ENCODE measurements at regions of chr7 and their contacts with region 1.

Region 1: DNA sequence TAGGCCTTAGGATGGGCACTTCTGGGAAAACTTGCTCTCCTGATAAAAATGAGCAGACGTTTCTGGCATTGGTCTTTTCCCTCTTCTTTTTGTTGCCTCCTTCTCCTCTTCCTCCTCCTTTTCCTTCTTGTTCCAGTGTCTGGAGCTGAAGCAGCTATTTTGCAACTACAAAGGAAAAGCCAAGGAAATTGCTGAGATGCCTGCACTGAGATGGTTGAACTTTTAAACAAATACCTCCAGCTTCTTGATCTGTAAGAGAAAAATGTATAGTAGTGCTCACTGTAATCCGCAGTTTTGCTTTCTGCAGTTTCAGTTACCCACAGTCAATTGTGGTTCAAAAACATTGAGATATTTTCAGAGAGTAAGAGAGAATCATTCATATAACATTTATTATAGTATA is 7.5 kb upstream of the SND1 start:
- DNase-seq: no peak
- ATAC-seq: no peak
- H3K4me3 ChIP-seq: no peak overlapping the region
- H3K27ac ChIP-seq: no peak overlapping the region
- H3K4me1 ChIP-seq: no peaks in the 10 kb centered on the region
- H3K27me3 ChIP-seq: no peaks in the 10 kb centered on the region
- CTCF ChIP-seq: no peak

Region 2: DNA sequence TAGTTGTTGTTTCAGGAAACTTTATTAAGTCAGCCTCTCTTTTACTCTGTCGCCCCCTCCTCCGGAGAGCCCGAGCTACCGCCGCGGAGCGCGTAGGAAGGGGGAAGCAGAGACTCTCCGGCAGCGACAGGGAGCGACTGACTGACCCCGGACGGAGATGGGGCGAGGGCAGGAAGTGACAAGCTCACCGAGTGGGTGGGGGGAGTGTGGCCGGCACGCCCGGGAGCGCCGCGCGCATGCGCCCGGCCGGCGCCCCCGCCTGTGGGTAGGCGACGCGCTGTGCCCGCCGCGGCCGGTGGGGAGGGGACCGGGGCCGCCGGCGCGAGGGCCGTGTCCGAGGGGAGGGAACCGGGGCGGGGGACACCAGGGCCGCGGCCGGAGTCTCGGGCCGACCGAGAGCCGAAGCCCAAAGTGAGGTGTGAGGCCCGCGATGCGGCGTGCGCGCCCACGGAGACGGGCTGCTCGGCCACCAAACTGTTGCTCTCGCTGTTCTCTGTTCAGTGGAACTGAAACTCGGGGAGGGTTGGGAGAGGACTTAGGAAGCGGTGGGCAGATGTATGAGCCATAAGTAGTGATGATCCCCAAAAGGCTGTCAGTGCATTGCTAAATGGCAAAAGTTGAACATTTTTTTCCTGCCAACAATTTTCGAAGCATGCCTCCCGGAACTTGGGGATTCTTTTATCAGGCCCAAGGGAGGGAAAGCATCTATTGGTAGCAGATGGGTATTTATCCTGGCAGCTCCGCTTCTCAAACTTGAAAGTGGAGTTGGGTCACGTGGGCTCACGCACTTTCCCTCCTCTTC is 251.7 kb before region 1 on chr7 and contains the start of gene ZNF800:
- CTCF ChIA-PET with region 1: no interaction called
- POLR2A ChIA-PET with region 1: no interaction called
- intact Hi-C with region 1: no loop called
- DNase-seq: peak; percentile 77
- ATAC-seq: peak; percentile 88
- H3K4me3 ChIP-seq: peak within 1 kb of the TSS; percentile 99
- H3K27ac ChIP-seq: peak within 1 kb of the TSS; percentile 63
- H3K4me1 ChIP-seq: peaks cover 21% of the 10 kb centered on the region
- H3K27me3 ChIP-seq: no peaks in the 10 kb centered on the region
- CTCF ChIP-seq: no peak
- total RNA-seq, gene ZNF800: 13.2 and 18.5 TPM in 2 replicates

Region 3: GRCh38 chr7:127594490-127594889 is 50.0 kb before region 1 on chr7:
- CTCF ChIA-PET with region 1: no interaction called
- POLR2A ChIA-PET with region 1: no interaction called
- intact Hi-C with region 1: loop called (anchors 5 kb)
- DNase-seq: no peak
- ATAC-seq: no peak
- H3K4me3 ChIP-seq: no peak overlapping the region
- H3K27ac ChIP-seq: no peak overlapping the region
- H3K4me1 ChIP-seq: peaks cover 1% of the 10 kb centered on the region
- H3K27me3 ChIP-seq: no peaks in the 10 kb centered on the region
- CTCF ChIP-seq: no peak